ENCODE measurements at regions of chr21 and their contacts with region 1.

Region 1: DNA sequence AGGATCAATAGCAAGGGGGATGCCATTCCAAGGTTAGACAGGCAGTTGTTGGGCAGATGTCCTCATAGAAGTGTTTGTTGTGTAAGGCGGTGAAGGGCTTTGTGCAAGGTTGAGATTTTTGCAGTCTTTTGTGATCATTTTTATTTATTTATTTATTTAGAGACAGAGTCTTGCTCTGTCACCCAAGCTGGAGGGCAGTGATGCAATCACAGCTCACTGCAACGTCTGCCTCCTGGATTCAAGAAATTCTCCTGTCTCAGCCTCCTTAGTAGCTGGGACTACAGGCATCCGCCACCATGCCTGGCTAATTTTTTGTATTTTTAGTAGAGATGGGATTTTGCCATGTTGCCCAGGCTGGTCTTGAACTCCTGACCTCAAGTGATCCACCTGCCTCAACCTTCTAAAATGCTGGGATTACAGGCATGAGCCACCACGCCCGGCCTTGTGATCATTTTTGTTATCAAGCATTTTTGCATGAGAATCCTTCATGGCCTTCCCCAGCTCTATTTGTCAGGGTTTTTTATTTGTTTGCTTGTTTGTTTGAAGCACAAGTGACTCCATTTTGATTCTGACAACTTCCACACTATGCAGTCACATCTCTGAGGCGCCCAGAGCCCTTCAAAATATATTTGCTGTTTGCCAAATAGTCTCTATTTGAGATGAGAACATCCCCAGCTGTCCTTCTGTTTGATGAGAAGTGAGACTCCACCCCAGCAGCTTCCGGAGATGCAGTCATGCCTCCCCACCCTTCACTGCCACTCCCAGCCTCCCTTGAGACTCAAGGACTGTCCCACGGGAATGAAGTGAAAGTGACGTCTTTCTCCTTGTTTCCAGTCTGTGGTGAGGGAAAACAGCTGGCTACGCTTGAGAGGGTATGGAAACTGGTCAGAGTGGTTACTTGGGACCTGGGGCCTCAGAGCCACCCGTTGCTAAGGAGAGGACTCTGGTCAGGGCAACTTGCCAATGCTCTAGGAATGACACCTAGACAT is 38.0 kb downstream of the TMEM50B start:
- H3K4me3 ChIP-seq: no peak overlapping the region
- H3K27ac ChIP-seq: no peak overlapping the region
- H3K4me1 ChIP-seq: peaks cover 4% of the 10 kb centered on the region; the same call in 1 of the 2 replicates
- CTCF ChIP-seq: no peak

Region 2: DNA sequence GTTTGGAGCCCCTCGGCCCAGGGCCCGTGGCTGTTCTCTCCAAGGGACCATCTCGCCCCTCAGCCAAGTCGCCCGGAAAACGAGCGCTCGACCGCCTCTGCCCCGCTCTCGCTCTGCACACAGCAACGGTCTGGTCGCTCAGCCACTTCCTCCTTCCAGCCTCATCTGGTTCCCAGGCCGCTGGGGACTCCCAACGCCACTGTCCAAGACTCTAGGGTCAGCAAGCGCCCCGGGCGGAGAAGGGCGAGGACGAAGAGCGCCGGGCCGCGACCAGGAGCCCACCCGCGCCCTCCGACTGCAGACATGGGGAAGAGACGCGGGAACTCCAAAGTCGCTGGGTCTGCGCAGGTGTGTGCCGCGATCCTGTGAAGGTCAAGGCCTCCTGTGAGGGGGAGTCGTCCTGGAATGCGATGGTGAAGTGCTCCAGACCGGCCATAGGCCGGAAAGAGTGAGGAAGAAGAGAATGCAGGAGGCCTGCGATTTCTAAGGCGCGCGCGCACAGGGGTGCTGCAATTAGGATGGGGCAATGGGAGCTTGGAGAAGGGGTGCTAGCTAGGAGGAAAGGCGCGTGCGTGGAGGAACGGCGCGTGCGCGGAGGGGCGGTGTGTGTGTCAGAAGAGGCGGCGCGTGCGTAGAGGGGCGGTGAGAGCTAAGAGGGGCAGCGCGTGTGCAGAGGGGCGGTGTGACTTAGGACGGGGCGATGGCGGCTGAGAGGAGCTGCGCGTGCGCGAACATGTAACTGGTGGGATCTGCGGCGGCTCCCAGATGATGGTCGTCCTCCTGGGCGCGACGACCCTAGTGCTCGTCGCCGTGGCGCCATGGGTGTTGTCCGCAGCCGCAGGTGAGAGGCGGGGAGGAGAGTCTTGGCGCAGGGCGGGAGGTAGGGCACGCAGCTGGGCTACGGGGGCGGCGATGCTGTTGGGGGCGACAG is 117.2 kb before region 1 on chr21 and contains the start of gene IFNAR1:
- CTCF ChIA-PET with region 1: interaction called, 10 read pairs
- POLR2A ChIA-PET with region 1: interaction called, 6 read pairs
- H3K4me3 ChIP-seq: peak within 1 kb of the TSS; percentile 88
- H3K27ac ChIP-seq: peak within 1 kb of the TSS; percentile 85
- H3K4me1 ChIP-seq: no peaks in the 10 kb centered on the region
- CTCF ChIP-seq: peak; percentile 71

Region 3: GRCh38 chr21:33360881-33361602 is 80.7 kb before region 1 on chr21:
- CTCF ChIA-PET with region 1: interaction called, 25 read pairs
- POLR2A ChIA-PET with region 1: interaction called, 4 read pairs
- H3K4me3 ChIP-seq: no peak overlapping the region; the same call in 1 of the 2 replicates
- H3K27ac ChIP-seq: no peak overlapping the region
- H3K4me1 ChIP-seq: no peaks in the 10 kb centered on the region
- CTCF ChIP-seq: peak; percentile 86

Region 4: DNA sequence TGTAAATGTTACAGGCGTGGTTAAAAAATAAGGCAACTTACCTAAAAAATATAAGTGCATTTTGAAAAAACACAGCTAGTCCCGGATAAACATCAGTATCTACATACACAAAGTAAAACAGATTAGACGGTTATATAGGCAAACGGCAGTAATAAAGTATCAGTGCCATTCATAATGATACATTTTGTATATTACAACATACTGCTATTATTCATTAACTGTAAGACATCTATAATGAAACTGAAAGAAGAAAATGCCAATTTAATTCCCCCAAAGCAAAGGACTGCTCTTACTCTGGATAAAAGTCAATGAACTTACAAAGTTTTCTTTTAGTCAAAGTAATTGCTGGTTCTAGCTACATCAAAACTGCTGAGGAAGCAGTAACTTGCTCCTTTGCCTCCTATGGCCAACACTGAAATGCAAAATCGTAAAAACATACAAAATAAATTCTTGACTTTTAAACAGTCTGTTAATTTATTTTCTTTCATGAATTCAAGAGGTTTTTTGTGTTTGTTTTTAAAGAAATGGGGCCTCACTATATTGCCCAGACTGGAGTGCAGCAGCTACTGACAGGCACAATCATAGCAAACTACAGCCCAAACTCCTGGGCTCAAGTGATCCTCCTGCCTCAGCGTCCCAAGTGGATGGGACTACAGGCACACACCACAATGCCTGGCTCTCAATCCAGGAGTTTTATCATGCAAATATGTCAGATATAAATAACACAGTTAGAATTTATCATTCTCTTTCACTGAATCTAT is 14.1 kb after region 1 on chr21:
- CTCF ChIA-PET with region 1: interaction called, 10 read pairs
- POLR2A ChIA-PET with region 1: no interaction called
- H3K4me3 ChIP-seq: no peak overlapping the region
- H3K27ac ChIP-seq: no peak overlapping the region
- H3K4me1 ChIP-seq: no peaks in the 10 kb centered on the region; the same call in none of the 2 replicates
- CTCF ChIP-seq: no peak

Region 5: DNA sequence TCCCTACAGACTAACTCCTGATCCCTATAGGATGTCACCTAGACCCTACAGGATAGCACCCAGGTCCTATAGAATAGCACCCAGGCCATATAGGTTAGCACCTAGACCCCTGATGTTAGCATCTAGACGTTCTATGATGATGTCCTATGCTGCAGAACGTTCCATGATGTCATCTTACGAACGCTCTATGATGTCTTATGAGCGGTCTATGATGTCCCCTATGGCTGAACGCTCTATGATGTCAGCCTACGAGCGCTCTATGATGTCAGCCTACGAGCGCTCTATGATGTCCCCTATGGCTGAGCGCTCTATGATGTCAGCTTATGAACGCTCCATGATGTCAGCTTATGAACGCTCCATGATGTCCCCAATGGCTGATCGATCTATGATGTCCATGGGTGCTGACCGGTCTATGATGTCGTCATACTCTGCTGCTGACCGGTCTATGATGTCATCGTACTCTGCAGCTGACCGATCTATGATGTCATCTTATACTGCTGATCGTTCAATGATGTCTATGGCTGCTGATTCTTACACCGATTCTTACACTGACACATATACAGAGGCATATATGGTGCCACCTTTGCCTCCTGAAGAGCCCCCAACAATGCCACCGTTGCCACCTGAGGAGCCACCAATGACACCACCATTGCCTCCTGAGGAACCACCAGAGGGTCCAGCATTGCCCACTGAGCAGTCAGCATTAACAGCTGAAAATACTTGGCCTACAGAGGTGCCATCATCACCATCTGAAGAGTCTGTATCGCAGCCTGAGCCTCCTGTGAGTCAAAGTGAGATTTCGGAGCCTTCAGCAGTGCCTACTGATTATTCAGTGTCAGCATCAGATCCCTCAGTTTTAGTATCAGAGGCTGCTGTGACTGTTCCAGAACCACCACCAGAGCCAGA is 110.6 kb after region 1 on chr21:
- CTCF ChIA-PET with region 1: no interaction called
- POLR2A ChIA-PET with region 1: no interaction called
- H3K4me3 ChIP-seq: no peak overlapping the region
- H3K27ac ChIP-seq: no peak overlapping the region
- H3K4me1 ChIP-seq: no peaks in the 10 kb centered on the region
- CTCF ChIP-seq: no peak

Measured in HEK293 (cell line).